Activated CD4-positive, alpha-beta T cell treated with anti-CD3 and anti-CD28 coated beads for 36 hours (primary cell): ENCODE measurements at regions of chr19 and their contacts with region 1.

Region 1: DNA sequence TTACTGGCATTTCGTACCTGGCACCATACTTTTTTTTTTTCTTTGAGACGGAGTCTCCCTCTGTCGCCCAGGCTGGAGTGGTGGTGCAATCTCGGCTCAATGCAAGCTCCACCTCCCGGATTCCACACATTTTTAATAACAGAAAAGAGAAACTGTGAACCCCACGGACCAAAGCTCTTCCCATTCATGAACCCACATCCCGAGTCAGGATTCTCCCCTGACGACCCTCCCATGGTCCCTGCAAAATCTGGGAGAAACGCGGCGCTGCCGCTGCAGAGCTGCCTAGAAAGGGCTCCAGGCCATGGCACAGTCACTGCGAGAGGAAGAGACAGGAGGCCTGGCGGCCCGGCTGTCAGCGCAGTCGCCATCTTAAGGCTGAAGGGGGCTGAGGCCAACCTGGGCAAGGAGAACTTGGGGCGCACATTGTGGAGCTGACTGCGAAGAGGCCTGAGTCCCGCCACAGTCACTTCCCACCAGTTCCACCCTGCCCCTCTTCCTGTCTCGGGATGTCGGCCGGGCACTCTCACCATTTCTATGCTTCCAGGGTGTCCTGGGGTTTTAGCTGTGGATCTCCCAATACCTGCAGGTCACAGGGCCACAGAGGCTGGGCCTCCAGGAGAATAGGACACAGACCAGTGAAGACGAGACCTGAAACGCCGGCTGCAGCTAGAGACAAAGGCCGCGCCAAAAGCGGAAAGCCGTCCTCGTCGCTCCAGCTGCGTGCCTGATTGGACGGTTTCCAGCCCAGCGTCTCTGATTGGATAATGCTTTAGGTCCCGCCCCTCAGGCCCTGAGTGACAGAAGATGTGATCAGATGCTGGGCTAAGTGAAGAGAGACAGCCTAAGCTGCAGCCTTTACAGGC is 71.0 kb downstream of the ZNF486 start:
- DNase-seq: peak; percentile 95
- ATAC-seq: peak; percentile 96
- H3K4me3 Mint-ChIP-seq: peak overlapping the region; percentile 90
- H3K27ac Mint-ChIP-seq: peak overlapping the region; percentile 91
- H3K4me1 Mint-ChIP-seq: peaks cover 4% of the 10 kb centered on the region
- H3K27me3 Mint-ChIP-seq: no peaks in the 10 kb centered on the region

Region 2: GRCh38 chr19:19865739-19866481 is 372.1 kb before region 1 on chr19 and contains the start of gene ZNF253:
- CTCF ChIA-PET with region 1: no interaction called
- POLR2A ChIA-PET with region 1: no interaction called
- intact Hi-C with region 1: loop called in 1 of 2 experiments (anchors 5 kb)
- DNase-seq: peak; percentile 98
- ATAC-seq: peak; percentile 93
- H3K4me3 Mint-ChIP-seq: peak within 1 kb of the TSS; percentile 88
- H3K27ac Mint-ChIP-seq: peak within 1 kb of the TSS; percentile 98
- H3K4me1 Mint-ChIP-seq: peaks cover 21% of the 10 kb centered on the region
- H3K27me3 Mint-ChIP-seq: no peaks in the 10 kb centered on the region
- total RNA-seq, gene ZNF253: 16.1 to 25.1 TPM

Region 3: DNA sequence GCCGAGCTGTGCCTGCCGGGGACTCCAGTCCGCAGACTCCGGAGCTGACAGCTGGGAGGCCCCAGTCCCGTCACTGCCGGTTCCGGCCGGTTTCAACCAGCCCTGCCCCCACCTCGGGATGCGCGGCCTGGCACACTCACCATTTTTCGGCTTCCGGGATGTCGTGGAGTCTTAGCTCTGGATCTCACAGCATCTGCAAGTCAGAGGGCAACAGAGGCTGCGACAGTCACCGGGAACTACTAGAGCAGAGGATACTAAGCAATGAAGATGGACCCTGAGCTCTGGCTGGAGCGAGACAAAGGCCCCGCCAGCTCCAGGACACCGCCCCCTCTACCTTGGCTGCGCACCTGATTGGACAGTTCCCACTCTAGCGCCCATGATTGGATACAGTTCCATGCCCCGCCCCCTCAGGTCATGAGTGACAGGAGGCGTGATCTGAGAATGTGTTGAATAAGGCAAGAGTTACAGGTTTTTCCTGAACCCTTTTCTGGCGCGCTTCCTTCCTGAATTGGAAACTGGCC is 198.7 kb before region 1 on chr19 and contains the start of gene ZNF682:
- CTCF ChIA-PET with region 1: no interaction called
- POLR2A ChIA-PET with region 1: interaction called, 7 read pairs
- intact Hi-C with region 1: loop called (anchors 1 to 2 kb)
- DNase-seq: peak; percentile 98
- ATAC-seq: peak; percentile 100
- H3K4me3 Mint-ChIP-seq: peak within 1 kb of the TSS; percentile 94
- H3K27ac Mint-ChIP-seq: peak within 1 kb of the TSS; percentile 94
- H3K4me1 Mint-ChIP-seq: peaks cover 16% of the 10 kb centered on the region
- H3K27me3 Mint-ChIP-seq: peaks cover 5% of the 10 kb centered on the region
- total RNA-seq, gene ZNF682: 6.0 to 7.5 TPM

Region 4: DNA sequence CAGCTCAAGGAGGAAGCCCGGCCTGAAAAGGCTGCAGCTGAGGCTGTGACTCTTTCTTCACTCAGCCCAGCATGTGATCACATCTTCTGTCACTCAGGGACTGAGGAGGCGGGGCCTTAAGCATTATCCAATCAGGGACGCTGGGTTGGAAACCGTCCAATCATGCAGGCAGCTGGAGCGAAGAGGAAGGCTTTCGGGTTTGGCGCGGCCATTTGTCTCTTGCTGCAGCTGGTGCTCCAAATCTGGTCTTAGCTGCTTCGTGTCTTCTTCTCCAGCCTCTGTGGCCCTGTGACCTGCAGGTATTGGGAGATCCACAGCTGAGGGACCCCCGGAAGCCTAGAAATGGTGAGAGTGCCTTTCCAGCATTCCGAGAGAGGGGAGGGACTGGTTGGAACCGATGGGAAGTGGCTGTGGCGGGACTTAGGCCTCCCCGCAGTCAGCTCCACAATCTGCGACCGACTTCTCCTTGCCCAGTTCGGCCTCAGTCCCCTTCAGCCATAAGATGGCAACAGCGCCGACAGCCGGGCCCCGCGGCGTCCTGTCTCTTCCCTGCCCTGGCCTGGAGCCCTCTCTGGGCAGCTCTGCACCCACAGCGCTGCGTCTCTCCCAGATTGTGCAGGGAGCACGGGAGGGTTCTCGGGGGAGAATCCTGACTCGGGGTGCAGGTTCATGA is 160.1 kb before region 1 on chr19 and contains the start of gene ZNF90:
- CTCF ChIA-PET with region 1: no interaction called
- POLR2A ChIA-PET with region 1: no interaction called
- intact Hi-C with region 1: loop called in 1 of 2 experiments (anchors 1 kb)
- DNase-seq: peak; percentile 96
- ATAC-seq: peak; percentile 100
- H3K4me3 Mint-ChIP-seq: peak within 1 kb of the TSS; percentile 97
- H3K27ac Mint-ChIP-seq: peak within 1 kb of the TSS; percentile 73
- H3K4me1 Mint-ChIP-seq: peaks cover 11% of the 10 kb centered on the region
- H3K27me3 Mint-ChIP-seq: no peaks in the 10 kb centered on the region
- total RNA-seq, gene ZNF90: 21.6 to 22.9 TPM

Region 5: DNA sequence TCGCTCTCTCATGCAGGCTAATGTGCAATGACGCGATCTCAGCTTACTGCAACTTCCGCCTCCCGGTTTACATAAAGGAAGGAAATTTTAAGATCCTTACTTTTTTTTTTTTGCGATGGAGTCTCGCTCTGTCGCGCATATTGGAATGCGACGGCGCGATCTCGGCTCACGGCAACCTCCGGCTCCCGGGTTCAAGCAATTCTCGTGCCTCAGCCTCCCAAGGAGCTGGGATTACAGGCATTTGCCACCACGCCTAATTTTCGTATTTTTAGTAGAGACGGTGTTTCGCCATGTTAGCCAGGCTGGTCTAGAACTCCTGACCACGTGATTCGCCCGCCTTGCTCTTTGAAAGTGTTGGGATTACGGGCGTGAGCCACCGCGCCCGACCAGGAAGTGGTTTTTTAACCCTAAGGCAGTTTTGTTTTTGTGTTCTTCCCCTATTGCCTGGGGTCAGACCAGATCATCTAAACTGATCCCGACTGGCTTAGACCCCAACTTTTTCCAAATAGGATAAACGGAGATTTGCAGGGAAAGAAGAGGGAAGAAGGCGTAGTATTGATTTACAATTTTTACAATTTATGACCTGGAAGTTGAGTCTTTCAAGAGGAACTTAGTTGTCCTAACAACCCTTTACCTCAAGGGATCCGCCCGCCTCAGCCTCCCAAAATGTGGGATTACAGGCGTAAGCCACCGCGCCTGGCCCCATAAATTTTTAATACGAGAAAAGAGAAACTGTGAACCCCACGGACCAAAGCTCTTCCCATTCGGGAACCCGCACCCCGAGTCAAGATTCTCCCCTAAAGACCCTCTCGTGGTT is 185.6 kb after region 1 on chr19:
- CTCF ChIA-PET with region 1: no interaction called
- POLR2A ChIA-PET with region 1: interaction called, 15 read pairs
- intact Hi-C with region 1: loop called in 1 of 2 experiments (anchors 2 kb)
- DNase-seq: peak; percentile 61
- ATAC-seq: no peak
- H3K4me3 Mint-ChIP-seq: peak overlapping the region; percentile 96
- H3K27ac Mint-ChIP-seq: peak overlapping the region; percentile 99
- H3K4me1 Mint-ChIP-seq: peaks cover 9% of the 10 kb centered on the region
- H3K27me3 Mint-ChIP-seq: no peaks in the 10 kb centered on the region

Region 6: GRCh38 chr19:20640545-20640944 is 402.6 kb after region 1 on chr19:
- CTCF ChIA-PET with region 1: no interaction called
- POLR2A ChIA-PET with region 1: no interaction called
- intact Hi-C with region 1: no loop called
- DNase-seq: no peak
- ATAC-seq: no peak
- H3K4me3 Mint-ChIP-seq: no peak overlapping the region
- H3K27ac Mint-ChIP-seq: no peak overlapping the region
- H3K4me1 Mint-ChIP-seq: no peaks in the 10 kb centered on the region
- H3K27me3 Mint-ChIP-seq: no peaks in the 10 kb centered on the region

Region 7: DNA sequence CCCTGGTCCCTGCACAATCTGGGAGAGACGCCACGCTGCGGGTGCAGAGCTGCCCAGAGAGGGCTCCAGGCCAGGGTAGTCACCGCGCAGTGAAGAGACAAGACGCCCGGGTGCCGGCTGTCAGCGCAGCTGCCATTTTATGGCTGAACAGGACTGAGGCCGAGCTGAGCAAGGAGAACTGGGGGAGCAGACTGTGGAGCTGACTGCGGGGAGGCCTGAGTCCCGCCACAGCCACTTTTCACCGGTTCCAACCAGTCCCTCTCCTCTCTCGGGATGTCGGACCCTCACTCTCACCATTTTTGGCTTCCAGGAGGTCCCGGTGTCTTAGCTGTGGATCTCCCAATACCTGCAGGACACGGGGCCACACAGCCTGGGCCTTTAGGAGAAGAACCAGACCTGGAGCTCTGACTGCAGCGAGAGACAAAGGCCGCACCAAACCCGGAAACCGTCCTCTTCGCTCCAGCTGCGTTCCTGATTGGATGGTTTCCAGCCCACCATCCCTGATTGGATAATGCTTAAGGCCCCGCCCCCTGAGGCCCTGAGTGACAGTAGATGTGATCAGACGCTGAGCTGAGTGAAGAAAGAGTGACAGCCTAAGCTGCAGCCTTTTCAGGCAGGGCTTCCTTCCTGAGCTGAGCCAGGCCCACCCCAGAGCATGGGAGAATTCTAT is 423.3 kb after region 1 on chr19 and contains the start of gene ZNF626:
- CTCF ChIA-PET with region 1: no interaction called
- POLR2A ChIA-PET with region 1: interaction called, 3 read pairs
- intact Hi-C with region 1: loop called in 1 of 2 experiments (anchors 1 kb)
- DNase-seq: peak; percentile 96
- ATAC-seq: peak; percentile 99
- H3K4me3 Mint-ChIP-seq: peak within 1 kb of the TSS; percentile 92
- H3K27ac Mint-ChIP-seq: peak within 1 kb of the TSS; percentile 95
- H3K4me1 Mint-ChIP-seq: peaks cover 33% of the 10 kb centered on the region
- H3K27me3 Mint-ChIP-seq: no peaks in the 10 kb centered on the region
- total RNA-seq, gene ZNF626: 8.0 to 13.3 TPM

Region 8: GRCh38 chr19:20999731-21000352 is 761.9 kb after region 1 on chr19:
- CTCF ChIA-PET with region 1: no interaction called
- POLR2A ChIA-PET with region 1: no interaction called
- intact Hi-C with region 1: loop called in 1 of 2 experiments (anchors 5 kb)
- DNase-seq: peak; percentile 95
- ATAC-seq: peak; percentile 100
- H3K4me3 Mint-ChIP-seq: peak overlapping the region; percentile 89
- H3K27ac Mint-ChIP-seq: peak overlapping the region; percentile 91
- H3K4me1 Mint-ChIP-seq: peaks cover 9% of the 10 kb centered on the region
- H3K27me3 Mint-ChIP-seq: no peaks in the 10 kb centered on the region